Activated B cell treated with CpG ODN at 0.5 μM for 24 hours (primary cell): ENCODE measurements at regions of chr18 and their contacts with region 1.

Region 1: GRCh38 chr18:79951578-79952455 is at the start of gene SLC66A2:
- DNase-seq: peak; percentile 97
- ATAC-seq: peak; percentile 80
- H3K4me3 Mint-ChIP-seq: peak within 1 kb of the TSS; percentile 85
- H3K27ac Mint-ChIP-seq: peak within 1 kb of the TSS; percentile 92
- H3K4me1 Mint-ChIP-seq: peaks cover 31% of the 10 kb centered on the region
- H3K27me3 Mint-ChIP-seq: no peaks in the 10 kb centered on the region
- CTCF ChIP-seq: no peak
- total RNA-seq, gene SLC66A2: 32.3 and 36.4 TPM in 2 replicates

Region 2: GRCh38 chr18:79068937-79069791 is 882.7 kb before region 1 on chr18 and contains the start of gene ATP9B:
- CTCF ChIA-PET with region 1: no interaction called
- POLR2A ChIA-PET with region 1: interaction called, 6 read pairs
- intact Hi-C with region 1: loop called (anchors 2 kb)
- DNase-seq: peak; percentile 99
- ATAC-seq: peak; percentile 84
- H3K4me3 Mint-ChIP-seq: peak within 1 kb of the TSS; percentile 88
- H3K27ac Mint-ChIP-seq: peak within 1 kb of the TSS; percentile 95
- H3K4me1 Mint-ChIP-seq: peaks cover 30% of the 10 kb centered on the region
- H3K27me3 Mint-ChIP-seq: peaks cover 3% of the 10 kb centered on the region
- CTCF ChIP-seq: no peak
- total RNA-seq, gene ATP9B: 41.5 and 49.2 TPM in 2 replicates

Region 3: GRCh38 chr18:79856119-79857007 is 95.5 kb before region 1 on chr18:
- CTCF ChIA-PET with region 1: no interaction called
- POLR2A ChIA-PET with region 1: interaction called, 4 read pairs
- intact Hi-C with region 1: loop called (anchors 5 kb)
- DNase-seq: no peak
- ATAC-seq: peak; percentile 57
- H3K4me3 Mint-ChIP-seq: peak overlapping the region; percentile 26
- H3K27ac Mint-ChIP-seq: no peak overlapping the region
- H3K4me1 Mint-ChIP-seq: peaks cover 30% of the 10 kb centered on the region
- H3K27me3 Mint-ChIP-seq: no peaks in the 10 kb centered on the region
- CTCF ChIP-seq: no peak

Region 4: GRCh38 chr18:79964330-79965118 is 12.7 kb after region 1 on chr18 and contains the start of gene HSBP1L1:
- CTCF ChIA-PET with region 1: no interaction called
- POLR2A ChIA-PET with region 1: interaction called, 8 read pairs
- intact Hi-C with region 1: loop called (anchors 1 kb)
- DNase-seq: peak; percentile 56
- ATAC-seq: peak; percentile 83
- H3K4me3 Mint-ChIP-seq: peak within 1 kb of the TSS; percentile 74
- H3K27ac Mint-ChIP-seq: no peak within 1 kb of the TSS
- H3K4me1 Mint-ChIP-seq: peaks cover 37% of the 10 kb centered on the region
- H3K27me3 Mint-ChIP-seq: peaks cover 2% of the 10 kb centered on the region
- CTCF ChIP-seq: no peak
- total RNA-seq, gene HSBP1L1: 0.98 and 2.5 TPM in 2 replicates

Region 5: DNA sequence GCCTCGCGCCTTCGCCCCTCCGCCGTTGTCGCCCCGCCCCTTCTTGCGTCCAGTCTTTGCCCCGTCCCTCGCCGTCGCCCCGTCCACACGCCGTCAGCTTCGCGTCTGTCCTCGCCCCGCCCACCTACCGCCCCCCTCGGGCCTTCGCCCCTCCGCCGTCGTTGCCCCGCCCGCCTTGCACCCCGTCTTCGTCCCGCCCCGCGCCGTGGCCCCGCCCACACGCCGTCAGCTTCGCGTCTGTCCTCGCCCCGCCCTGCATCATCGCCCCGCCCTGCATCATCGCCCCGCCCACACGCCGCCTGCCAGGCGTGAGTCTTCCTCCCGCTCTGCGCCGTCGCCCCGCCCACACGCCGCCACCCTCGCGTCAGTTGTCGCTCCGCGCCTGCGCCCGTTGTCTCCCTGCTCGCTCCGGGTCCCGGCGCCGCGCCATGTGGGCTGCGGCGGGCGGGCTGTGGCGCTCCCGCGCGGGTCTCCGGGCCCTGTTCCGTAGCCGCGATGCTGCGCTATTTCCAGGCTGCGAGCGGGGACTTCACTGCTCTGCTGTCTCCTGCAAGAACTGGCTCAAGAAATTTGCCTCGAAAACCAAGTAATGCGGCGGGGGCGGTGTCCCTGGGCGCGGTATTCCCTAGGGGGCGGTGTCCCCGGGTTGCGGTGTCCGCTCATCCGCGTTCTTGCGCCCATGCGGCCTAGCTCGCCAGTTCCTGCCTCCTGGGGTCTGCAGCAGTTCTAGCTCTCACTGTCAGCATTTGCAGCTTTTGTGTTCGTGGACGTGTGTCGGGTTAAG is 82.4 kb after region 1 on chr18 and contains the start of gene RBFA:
- CTCF ChIA-PET with region 1: no interaction called
- POLR2A ChIA-PET with region 1: interaction called, 4 read pairs
- intact Hi-C with region 1: loop called (anchors 1 kb)
- DNase-seq: peak; percentile 99
- ATAC-seq: peak; percentile 73
- H3K4me3 Mint-ChIP-seq: peak within 1 kb of the TSS; percentile 90
- H3K27ac Mint-ChIP-seq: peak within 1 kb of the TSS; percentile 93
- H3K4me1 Mint-ChIP-seq: peaks cover 24% of the 10 kb centered on the region
- H3K27me3 Mint-ChIP-seq: no peaks in the 10 kb centered on the region
- CTCF ChIP-seq: no peak
- total RNA-seq, gene RBFA: 21.6 and 23.3 TPM in 2 replicates

Region 6: DNA sequence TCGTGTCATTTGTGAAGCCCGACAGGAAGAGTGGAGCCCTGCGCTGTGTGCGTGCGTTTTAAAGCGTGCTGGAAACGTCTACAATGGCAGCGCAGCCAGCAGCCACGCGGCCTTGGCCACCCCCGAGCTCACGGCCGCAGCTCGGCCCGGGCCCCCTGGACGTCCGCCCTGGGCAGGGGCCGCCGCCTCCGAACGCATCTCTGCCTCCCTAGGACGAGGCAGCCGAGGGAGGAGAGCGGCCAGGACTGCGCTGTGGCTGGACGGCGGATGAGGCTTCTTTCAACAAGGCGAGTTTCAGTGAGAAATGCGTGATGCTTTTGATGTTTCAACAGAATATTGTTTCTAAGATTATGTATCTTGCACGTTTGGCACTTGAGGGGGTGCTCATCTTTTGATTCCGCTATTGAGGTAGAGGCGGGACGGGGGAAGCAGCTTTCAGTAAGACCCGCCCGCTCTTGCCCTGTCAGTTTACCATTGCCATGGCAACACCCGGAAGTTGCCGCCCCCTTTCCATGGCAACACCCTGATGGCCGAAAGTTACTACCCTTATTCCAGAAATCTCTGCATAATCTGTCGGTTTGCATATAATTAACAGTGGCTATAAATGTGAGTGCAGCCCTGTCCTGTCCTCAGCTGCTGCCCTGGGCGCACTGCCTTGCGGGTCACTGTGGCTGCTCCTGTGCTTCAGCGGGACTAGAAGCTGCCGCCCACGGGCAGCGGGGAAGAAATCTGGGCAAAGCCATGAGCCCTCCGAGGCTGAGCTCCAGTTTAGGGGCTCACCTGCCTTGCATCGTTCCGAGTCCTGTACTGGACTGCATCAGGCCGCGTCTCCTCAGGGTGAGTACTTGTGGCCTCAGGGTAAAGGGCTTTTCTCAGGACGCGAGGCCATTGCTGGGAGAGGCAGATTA is 195.9 kb after region 1 on chr18:
- CTCF ChIA-PET with region 1: no interaction called
- POLR2A ChIA-PET with region 1: no interaction called
- intact Hi-C with region 1: no loop called
- DNase-seq: peak; percentile 74
- ATAC-seq: peak; percentile 88
- H3K4me3 Mint-ChIP-seq: peak overlapping the region; percentile 90
- H3K27ac Mint-ChIP-seq: peak overlapping the region; percentile 69
- H3K4me1 Mint-ChIP-seq: peaks cover 20% of the 10 kb centered on the region
- H3K27me3 Mint-ChIP-seq: no peaks in the 10 kb centered on the region
- CTCF ChIP-seq: no peak